PC-9 (cell line): ENCODE measurements at regions of chr7 and their contacts with region 1.

Region 1: GRCh38 chr7:82017334-82017943 is 247.6 kb upstream of the HGF start:
- DNase-seq: no peak
- H3K4me3 ChIP-seq: no peak overlapping the region
- H3K27ac ChIP-seq: no peak overlapping the region
- H3K4me1 ChIP-seq: peaks cover 9% of the 10 kb centered on the region
- H3K27me3 ChIP-seq: no peaks in the 10 kb centered on the region
- CTCF ChIP-seq: peak; percentile 72

Region 2: GRCh38 chr7:81482600-81483186 is 534.7 kb before region 1 on chr7:
- CTCF ChIA-PET with region 1: no interaction called
- POLR2A ChIA-PET with region 1: no interaction called
- intact Hi-C with region 1: loop called (anchors 1 kb)
- DNase-seq: no peak
- H3K4me3 ChIP-seq: no peak overlapping the region
- H3K27ac ChIP-seq: no peak overlapping the region
- H3K4me1 ChIP-seq: no peaks in the 10 kb centered on the region
- H3K27me3 ChIP-seq: no peaks in the 10 kb centered on the region
- CTCF ChIP-seq: peak; percentile 76

Region 3: GRCh38 chr7:81510122-81510521 is 507.3 kb before region 1 on chr7:
- CTCF ChIA-PET with region 1: no interaction called
- POLR2A ChIA-PET with region 1: no interaction called
- intact Hi-C with region 1: no loop called
- DNase-seq: no peak
- H3K4me3 ChIP-seq: no peak overlapping the region
- H3K27ac ChIP-seq: no peak overlapping the region
- H3K4me1 ChIP-seq: no peaks in the 10 kb centered on the region
- H3K27me3 ChIP-seq: no peaks in the 10 kb centered on the region
- CTCF ChIP-seq: no peak

Region 4: GRCh38 chr7:81715984-81716588 is 301.4 kb before region 1 on chr7:
- CTCF ChIA-PET with region 1: no interaction called
- POLR2A ChIA-PET with region 1: no interaction called
- intact Hi-C with region 1: loop called (anchors 2 kb)
- DNase-seq: peak in 1 of 2 experiments; percentile 12
- H3K4me3 ChIP-seq: no peak overlapping the region
- H3K27ac ChIP-seq: no peak overlapping the region
- H3K4me1 ChIP-seq: no peaks in the 10 kb centered on the region
- H3K27me3 ChIP-seq: no peaks in the 10 kb centered on the region
- CTCF ChIP-seq: peak; percentile 31; the same call in 1 of the 2 replicates

Region 5: GRCh38 chr7:81903115-81903514 is 114.3 kb before region 1 on chr7:
- CTCF ChIA-PET with region 1: no interaction called
- POLR2A ChIA-PET with region 1: no interaction called
- intact Hi-C with region 1: no loop called
- DNase-seq: no peak
- H3K4me3 ChIP-seq: no peak overlapping the region
- H3K27ac ChIP-seq: no peak overlapping the region
- H3K4me1 ChIP-seq: peaks cover 3% of the 10 kb centered on the region
- H3K27me3 ChIP-seq: no peaks in the 10 kb centered on the region
- CTCF ChIP-seq: no peak

Region 6: DNA sequence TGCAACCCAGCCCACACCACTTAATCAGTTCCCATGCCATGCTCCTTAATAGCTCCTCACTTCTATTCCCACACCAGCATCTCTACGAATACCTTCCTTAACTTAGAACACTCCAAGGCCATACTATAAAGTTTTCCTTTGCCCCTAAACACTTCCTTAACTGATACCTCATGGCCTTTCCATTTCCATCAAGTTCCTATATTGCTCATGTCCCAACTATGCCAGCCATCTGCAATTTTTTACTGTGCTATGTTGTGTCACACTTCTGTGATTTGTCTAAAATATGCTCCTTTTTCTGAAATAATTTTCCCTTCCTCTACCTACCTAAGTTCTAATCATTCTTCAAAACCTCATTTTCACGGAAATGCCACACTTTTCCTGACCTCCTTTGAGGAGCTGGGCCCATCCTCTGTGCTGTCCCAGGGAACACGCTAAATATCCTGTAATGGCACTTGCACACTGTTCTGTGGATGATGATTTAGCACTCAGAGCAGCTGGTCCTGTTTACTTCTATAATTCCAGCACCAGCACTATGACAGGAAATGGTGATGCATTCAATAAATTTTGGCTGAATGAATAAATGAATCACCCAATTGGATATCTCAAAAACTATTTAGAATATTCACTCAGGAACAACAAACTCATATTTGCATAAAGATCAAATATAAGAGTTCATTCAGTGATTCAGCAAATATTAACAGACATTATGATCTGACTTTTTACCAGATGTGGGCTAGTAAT is 18.9 kb after region 1 on chr7:
- CTCF ChIA-PET with region 1: no interaction called
- POLR2A ChIA-PET with region 1: no interaction called
- intact Hi-C with region 1: no loop called
- DNase-seq: no peak
- H3K4me3 ChIP-seq: no peak overlapping the region
- H3K27ac ChIP-seq: no peak overlapping the region
- H3K4me1 ChIP-seq: no peaks in the 10 kb centered on the region
- H3K27me3 ChIP-seq: no peaks in the 10 kb centered on the region
- CTCF ChIP-seq: no peak